ENCODE measurements at regions of chr9 and their contacts with region 1.

Region 1: GRCh38 chr9:137295238-137295811 is 6.7 kb downstream of the NRARP start:
- DNase-seq: peak; percentile 43
- H3K4me3 ChIP-seq: peak overlapping the region in 2 of 3 experiments; percentile 31 to 64
- H3K27ac ChIP-seq: peak overlapping the region; percentile 58
- H3K4me1 ChIP-seq: peaks cover 44% of the 10 kb centered on the region
- H3K27me3 ChIP-seq: no peaks in the 10 kb centered on the region
- CTCF ChIP-seq: peak; percentile 44 to 76
- POLR2A ChIP-seq: peak; percentile 22

Region 2: DNA sequence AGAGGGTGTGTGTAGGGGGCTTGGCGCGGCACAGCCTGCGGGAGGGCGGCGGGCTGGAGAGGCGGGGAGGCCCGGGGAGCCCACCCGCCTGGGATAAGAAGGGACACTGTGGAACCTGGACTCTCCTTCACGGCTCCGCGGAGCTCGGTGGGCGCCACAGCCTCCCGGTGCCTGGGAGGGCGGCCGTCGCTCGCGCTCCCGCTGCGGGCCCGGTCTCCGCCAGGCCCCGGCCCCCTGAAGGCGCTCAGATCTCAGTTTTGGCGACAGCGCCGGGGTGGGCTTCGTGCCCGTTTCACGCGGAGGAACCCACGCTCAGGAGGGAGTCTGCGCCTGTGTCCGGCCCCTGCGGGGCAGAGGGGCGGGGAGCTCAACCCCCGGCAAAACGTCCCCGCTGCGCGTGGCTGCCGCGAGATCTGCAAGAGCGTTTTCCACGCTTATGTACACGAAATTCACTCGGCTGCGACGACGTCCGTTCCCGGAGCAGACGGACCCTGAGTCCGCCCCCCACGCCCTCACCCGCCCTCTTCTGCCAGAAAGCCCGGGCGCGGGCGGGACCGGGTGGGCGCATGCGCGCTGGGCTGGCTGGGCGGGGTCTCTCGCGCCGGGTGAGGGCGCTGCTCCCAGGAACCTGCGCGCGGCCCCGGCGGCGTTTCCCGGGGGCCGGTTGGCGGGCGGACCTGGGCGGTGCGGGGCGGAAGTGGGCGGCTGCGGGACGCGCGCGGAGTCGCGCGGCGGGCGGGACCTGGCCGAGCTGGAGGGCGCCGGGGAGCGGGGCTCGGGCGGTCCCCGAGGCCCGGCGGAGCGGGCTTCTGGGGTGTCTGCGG is 40.5 kb before region 1 on chr9 and contains the start of gene NELFB:
- CTCF ChIA-PET with region 1: no interaction called
- POLR2A ChIA-PET with region 1: no interaction called
- dilution Hi-C with region 1: no loop called
- intact Hi-C with region 1: no loop called
- DNase-seq: peak; percentile 75
- H3K4me3 ChIP-seq: peak within 1 kb of the TSS; percentile 41 to 94 (median 41)
- H3K27ac ChIP-seq: no peak within 1 kb of the TSS
- H3K4me1 ChIP-seq: peaks cover 14% of the 10 kb centered on the region
- H3K27me3 ChIP-seq: no peaks in the 10 kb centered on the region
- CTCF ChIP-seq: no peak
- POLR2A ChIP-seq: peak; percentile 85
- total RNA-seq, gene NELFB: 70.2 and 76.1 TPM in 2 replicates

Region 3: DNA sequence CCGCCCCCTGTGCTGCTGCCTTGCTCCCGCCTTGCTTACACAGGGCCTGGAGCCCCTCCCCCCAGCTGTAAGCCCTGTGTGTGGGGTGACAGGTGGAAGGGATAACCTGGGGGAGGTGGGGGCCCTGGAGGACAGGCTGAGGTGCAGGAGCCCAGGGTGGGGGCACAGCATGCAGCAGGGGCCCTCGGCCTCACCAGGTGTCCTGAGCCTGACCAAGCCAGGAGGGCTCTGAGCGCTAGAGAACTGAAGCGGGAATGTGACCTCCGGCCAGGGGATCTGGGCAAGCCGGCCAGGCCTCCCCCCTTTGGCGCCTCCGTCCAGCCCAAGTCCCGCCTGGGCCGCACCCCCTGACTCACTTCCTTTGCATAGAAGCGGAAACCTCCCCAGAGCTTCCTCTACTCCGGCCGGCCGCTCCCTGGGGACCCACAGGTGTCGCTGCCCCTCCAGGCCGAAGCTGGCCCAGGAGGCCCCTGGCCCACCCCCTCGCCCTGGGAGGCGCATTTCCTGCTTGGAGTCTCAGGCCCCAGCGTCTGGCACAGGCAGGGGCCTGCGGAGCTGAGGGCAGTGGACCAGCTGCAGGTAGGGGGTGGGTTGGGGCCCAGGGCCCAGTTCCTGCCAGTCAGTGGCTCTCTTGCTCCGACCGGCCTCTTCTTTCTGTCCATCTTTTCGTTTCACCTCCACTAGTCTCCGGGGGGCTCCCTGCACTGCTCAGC is 17.8 kb before region 1 on chr9 and contains the start of gene TOR4A:
- CTCF ChIA-PET with region 1: interaction called, 4 read pairs
- POLR2A ChIA-PET with region 1: interaction called, 11 read pairs
- dilution Hi-C with region 1: no loop called
- intact Hi-C with region 1: loop called (anchors 1 kb)
- DNase-seq: peak; percentile 93
- H3K4me3 ChIP-seq: peak within 1 kb of the TSS; percentile 39 to 60 (median 51)
- H3K27ac ChIP-seq: peak within 1 kb of the TSS; percentile 91
- H3K4me1 ChIP-seq: peaks cover 25% of the 10 kb centered on the region
- H3K27me3 ChIP-seq: no peaks in the 10 kb centered on the region
- CTCF ChIP-seq: peak; percentile 29 to 39
- POLR2A ChIP-seq: peak; percentile 95
- total RNA-seq, gene TOR4A: 46.4 and 48.0 TPM in 2 replicates

Region 4: DNA sequence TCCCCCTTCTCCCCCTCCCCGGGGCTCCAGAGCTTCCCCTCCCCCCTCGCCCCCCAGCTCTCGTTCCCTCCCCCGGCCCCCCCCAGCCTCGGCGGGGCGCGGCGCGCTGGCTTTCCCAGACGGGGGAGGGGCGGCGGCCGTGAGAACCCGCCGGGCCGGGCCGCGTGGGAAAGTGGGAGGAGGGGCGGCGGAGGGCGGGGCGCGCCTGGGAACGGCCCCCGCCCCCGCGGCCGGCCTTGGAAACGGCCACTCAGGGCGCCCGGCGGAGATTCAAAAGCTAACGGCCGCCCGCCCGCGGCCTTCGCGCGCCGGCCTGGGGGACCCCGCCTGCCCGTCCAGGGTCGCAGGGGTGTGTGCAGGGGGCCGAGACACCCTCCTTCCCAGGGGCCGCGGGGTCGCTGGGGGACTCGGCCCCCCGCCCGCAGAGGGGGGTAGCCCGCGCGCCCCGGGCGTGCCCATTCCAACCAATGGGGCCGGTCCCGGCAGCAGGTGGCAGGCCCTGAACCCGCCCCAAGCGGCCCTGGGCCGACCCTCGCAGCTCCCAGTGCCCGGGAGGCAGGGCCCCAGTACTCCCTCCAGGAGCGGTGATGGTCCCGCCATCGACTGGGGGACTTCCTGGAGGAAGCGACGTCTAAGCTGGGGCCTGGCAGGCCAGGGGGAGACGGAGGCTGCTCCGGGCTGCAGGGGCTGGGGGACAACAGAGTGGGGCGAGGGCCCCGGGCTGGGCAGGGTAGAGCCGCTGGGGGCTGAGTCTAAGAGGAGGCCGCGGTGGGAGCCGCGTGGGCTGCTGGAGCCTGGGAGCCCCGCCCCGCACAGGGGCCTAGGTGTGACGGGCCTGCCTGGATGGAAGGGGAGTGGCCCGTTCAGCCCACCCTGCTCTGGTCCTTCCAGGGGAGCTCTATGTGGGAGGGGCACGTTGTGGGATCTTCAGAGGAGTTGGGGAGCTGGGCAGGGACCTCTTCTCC is 21.0 kb after region 1 on chr9:
- CTCF ChIA-PET with region 1: interaction called, 3 read pairs
- POLR2A ChIA-PET with region 1: no interaction called
- dilution Hi-C with region 1: no loop called
- intact Hi-C with region 1: loop called (anchors 1 kb)
- DNase-seq: peak; percentile 65
- H3K4me3 ChIP-seq: peak overlapping the region in 1 of 3 experiments; percentile 32
- H3K27ac ChIP-seq: peak overlapping the region; percentile 71
- H3K4me1 ChIP-seq: peaks cover 21% of the 10 kb centered on the region
- H3K27me3 ChIP-seq: no peaks in the 10 kb centered on the region
- CTCF ChIP-seq: no peak
- POLR2A ChIP-seq: no peak

Region 5: DNA sequence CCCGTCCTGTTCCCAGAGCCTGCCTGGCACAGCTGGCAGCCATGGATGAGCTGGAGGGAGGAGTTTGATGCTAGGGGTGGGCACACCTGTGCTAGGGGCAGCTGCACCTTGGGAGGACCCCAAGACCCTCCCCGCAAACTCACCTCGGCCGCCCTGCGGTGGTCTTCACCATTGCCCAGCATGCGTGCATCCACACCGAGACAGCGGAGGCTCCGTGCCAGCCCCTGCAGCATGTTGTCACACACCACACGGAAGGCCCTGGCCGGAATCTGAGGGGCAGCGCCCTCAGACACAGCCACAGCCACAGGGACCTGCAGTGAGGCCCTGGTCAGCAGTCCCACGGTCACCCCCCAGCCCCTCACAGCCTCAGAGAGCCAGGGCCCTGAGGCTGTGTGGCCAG is 52.6 kb after region 1 on chr9:
- CTCF ChIA-PET with region 1: no interaction called
- POLR2A ChIA-PET with region 1: no interaction called
- dilution Hi-C with region 1: no loop called
- intact Hi-C with region 1: no loop called
- DNase-seq: no peak
- H3K4me3 ChIP-seq: no peak overlapping the region
- H3K27ac ChIP-seq: no peak overlapping the region
- H3K4me1 ChIP-seq: no peaks in the 10 kb centered on the region
- H3K27me3 ChIP-seq: no peaks in the 10 kb centered on the region
- CTCF ChIP-seq: no peak
- POLR2A ChIP-seq: no peak

Region 6: DNA sequence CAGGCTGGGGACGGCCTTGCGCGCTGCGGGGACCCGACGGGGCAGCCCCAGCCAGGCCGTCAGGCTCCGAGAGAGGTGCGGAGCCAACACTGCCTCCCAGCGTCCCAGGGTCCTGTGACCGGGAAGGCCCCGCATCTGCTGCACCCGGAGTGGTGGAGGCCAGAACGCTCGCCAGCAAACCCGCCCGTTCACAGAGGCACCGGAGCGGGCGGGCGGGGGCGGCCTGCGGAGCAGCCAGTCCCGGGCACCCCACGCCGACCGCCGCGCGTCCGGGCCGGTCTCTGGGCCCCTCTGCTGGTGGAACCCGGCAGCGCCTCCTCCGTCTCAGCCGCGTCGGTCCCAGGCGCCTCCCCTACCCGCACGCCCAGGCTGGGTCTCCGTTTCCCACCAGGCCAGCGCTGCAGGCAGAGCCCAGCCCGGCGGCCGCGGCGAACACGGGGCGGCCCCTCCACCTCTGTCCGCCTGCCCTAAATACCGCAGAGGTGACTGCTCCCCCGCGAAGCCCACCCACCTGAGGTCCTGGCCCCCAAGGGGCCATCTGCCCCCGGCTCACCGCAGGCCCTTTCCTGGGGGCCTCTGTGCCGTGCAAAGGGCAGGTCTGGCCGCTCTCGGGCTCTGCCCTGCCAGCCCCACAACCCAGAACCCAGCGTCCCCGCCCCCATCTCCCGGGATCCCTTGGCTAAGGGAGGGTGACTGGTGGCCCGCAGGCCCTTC is 111.7 kb after region 1 on chr9:
- CTCF ChIA-PET with region 1: interaction called, 5 read pairs
- POLR2A ChIA-PET with region 1: no interaction called
- dilution Hi-C with region 1: no loop called
- intact Hi-C with region 1: loop called (anchors 1 kb)
- DNase-seq: peak; percentile 85
- H3K4me3 ChIP-seq: peak overlapping the region in 1 of 3 experiments; percentile 17
- H3K27ac ChIP-seq: no peak overlapping the region
- H3K4me1 ChIP-seq: peaks cover 24% of the 10 kb centered on the region
- H3K27me3 ChIP-seq: no peaks in the 10 kb centered on the region
- CTCF ChIP-seq: peak; percentile 83 to 87
- POLR2A ChIP-seq: no peak

Region 7: GRCh38 chr9:137445275-137445807 is 150.0 kb after region 1 on chr9:
- CTCF ChIA-PET with region 1: interaction called, 3 read pairs
- POLR2A ChIA-PET with region 1: no interaction called
- dilution Hi-C with region 1: no loop called
- intact Hi-C with region 1: loop called (anchors 1 kb)
- DNase-seq: peak; percentile 78
- H3K4me3 ChIP-seq: no peak overlapping the region
- H3K27ac ChIP-seq: no peak overlapping the region
- H3K4me1 ChIP-seq: no peaks in the 10 kb centered on the region
- H3K27me3 ChIP-seq: no peaks in the 10 kb centered on the region
- CTCF ChIP-seq: peak; percentile 77 to 87
- POLR2A ChIP-seq: no peak

Measured in endothelial cell of umbilical vein (primary cell).